ENCODE measurements at regions of chr12 and their contacts with region 1.

Region 1: DNA sequence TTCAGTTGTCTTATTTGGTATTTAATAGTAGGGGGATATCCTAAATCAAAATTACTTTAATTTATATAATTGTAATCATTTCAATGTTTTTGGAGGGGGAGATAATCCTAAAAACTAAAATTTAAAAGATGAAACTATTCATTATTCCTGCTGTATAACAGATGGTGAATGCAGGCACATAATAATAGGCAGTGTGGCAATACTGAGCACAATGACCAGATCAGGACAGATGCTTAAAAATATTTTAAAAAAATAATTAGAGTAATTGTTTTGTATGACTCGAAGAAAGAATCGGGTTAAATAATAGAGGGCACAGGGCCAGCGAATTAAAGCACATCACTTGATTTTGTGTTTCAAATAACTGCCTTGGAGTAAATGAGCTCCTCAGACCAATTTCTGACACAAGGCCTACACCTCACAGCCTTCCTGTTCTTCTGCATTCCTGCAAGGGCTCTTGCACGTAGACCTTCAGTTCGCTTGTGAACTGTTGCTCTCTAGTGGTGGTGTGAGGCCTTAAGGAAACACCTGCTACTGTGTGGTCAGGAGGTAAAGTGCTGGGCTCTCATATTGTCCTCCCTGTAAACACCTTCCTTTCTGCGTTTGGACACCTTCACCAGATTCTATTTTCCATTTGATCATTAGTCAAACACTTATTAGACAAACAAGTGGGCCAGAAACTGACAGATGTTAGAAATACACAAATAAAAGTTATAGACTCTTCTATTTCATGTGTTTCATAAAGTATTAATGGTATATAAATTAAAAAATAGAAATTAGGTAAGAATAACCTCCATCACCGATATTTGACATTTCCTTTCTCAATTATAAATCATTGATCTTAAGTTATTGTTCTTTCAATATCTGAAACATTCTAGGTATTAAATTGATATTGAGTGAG is 29.3 kb upstream of the KLRF1 start:
- DNase-seq: peak; percentile 87 to 88
- H3K4me3 ChIP-seq: no peak overlapping the region
- H3K4me3 Mint-ChIP-seq: no peak overlapping the region
- H3K27ac Mint-ChIP-seq: no peak overlapping the region
- H3K4me1 ChIP-seq: no peaks in the 10 kb centered on the region
- H3K4me1 Mint-ChIP-seq: no peaks in the 10 kb centered on the region
- H3K27me3 ChIP-seq: no peaks in the 10 kb centered on the region
- H3K27me3 Mint-ChIP-seq: peaks cover 12% of the 10 kb centered on the region
- CTCF ChIP-seq: peak; percentile 67 to 84

Region 2: DNA sequence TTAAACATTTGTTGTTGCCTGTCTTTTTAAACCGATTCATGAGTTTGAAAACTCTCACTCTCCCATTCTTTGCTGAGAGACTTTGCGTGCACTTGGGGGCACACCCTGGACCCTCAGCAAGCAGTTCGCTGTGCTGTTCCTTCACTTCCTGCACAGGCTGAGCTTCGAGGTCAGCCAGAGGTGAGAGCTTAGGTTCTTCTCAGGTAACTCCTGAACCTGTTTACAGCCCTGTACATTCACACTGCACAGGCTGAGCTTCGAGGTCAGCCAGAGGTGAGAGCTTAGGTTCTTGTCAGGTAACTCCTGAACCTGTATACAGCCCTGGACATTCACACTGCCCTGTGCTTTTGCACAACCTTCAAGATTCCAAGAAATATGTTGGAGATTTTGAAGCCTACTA is 55.3 kb before region 1 on chr12:
- CTCF ChIA-PET with region 1: interaction called, 63 read pairs
- POLR2A ChIA-PET with region 1: no interaction called
- intact Hi-C with region 1: no loop called
- DNase-seq: no peak
- H3K4me3 ChIP-seq: no peak overlapping the region
- H3K4me3 Mint-ChIP-seq: no peak overlapping the region
- H3K27ac Mint-ChIP-seq: no peak overlapping the region
- H3K4me1 ChIP-seq: no peaks in the 10 kb centered on the region
- H3K4me1 Mint-ChIP-seq: no peaks in the 10 kb centered on the region
- H3K27me3 ChIP-seq: no peaks in the 10 kb centered on the region
- H3K27me3 Mint-ChIP-seq: peaks cover 13% of the 10 kb centered on the region
- CTCF ChIP-seq: no peak

Region 3: GRCh38 chr12:9750276-9751203 is 47.4 kb before region 1 on chr12:
- CTCF ChIA-PET with region 1: interaction called, 63 read pairs
- POLR2A ChIA-PET with region 1: no interaction called
- intact Hi-C with region 1: loop called (anchors 1 kb)
- DNase-seq: peak in 1 of 2 experiments; percentile 72
- H3K4me3 ChIP-seq: no peak overlapping the region
- H3K4me3 Mint-ChIP-seq: no peak overlapping the region
- H3K27ac Mint-ChIP-seq: no peak overlapping the region
- H3K4me1 ChIP-seq: no peaks in the 10 kb centered on the region
- H3K4me1 Mint-ChIP-seq: peaks cover 6% of the 10 kb centered on the region
- H3K27me3 ChIP-seq: no peaks in the 10 kb centered on the region
- H3K27me3 Mint-ChIP-seq: peaks cover 12% of the 10 kb centered on the region
- CTCF ChIP-seq: peak; percentile 91 to 96

Measured in Caco-2 (cell line).